ENCODE measurements at regions of chr2 and their contacts with region 1.

Region 1: DNA sequence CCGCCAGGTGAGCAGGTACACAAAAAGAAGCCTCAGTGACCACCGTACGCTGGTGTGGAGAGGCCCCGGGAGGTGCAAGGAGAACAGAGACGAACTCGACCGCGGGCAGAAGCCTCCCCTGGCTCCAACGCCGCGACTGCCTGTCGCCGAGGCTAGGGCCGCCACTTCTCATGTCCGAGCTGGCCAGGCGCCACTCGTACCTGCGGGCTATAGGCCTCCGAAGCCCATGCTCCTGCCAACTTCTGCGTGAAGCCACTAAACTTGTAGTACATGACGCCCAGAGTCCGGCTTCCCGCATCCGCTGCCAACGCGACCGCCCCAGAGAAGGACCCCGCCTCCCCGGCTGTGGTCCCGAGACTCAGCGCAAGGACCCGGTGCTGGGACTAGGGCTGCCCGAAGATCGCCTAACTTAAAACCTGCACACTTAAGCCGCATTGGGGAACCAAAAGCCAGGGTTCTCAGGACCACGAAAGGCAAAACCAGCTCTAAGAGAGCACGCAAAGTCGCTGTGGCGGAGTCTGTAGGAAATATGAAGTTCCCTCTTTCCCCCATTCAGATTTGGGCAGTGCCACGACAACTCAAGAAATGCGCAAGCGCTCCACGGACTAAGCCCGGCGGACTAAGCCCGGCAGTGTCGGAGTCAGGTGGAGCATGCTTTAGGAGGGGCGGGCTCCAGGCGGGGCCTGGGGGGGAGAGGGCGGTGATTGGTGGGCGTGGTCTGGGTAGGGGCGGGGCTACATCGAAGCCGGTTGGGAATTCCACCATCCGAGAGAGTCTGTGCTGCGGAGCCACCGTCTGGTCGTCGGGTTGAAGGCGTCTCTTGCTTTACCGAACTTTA is at the start of gene COX7A2L:
- DNase-seq: peak; percentile 97 to 99 (median 98)
- H3K4me3 ChIP-seq: peak within 1 kb of the TSS; percentile 99
- H3K27ac ChIP-seq: peak within 1 kb of the TSS; percentile 70 to 89
- H3K4me1 ChIP-seq: peaks cover 5% of the 10 kb centered on the region
- H3K27me3 ChIP-seq: no peaks in the 10 kb centered on the region
- CTCF ChIP-seq: peak in 2 of 3 donors; percentile 18 to 38
- EP300 ChIP-seq: no peak
- POLR2A ChIP-seq: peak; percentile 81
- total RNA-seq, gene COX7A2L: 130 to 294 (median 162) TPM

Region 2: DNA sequence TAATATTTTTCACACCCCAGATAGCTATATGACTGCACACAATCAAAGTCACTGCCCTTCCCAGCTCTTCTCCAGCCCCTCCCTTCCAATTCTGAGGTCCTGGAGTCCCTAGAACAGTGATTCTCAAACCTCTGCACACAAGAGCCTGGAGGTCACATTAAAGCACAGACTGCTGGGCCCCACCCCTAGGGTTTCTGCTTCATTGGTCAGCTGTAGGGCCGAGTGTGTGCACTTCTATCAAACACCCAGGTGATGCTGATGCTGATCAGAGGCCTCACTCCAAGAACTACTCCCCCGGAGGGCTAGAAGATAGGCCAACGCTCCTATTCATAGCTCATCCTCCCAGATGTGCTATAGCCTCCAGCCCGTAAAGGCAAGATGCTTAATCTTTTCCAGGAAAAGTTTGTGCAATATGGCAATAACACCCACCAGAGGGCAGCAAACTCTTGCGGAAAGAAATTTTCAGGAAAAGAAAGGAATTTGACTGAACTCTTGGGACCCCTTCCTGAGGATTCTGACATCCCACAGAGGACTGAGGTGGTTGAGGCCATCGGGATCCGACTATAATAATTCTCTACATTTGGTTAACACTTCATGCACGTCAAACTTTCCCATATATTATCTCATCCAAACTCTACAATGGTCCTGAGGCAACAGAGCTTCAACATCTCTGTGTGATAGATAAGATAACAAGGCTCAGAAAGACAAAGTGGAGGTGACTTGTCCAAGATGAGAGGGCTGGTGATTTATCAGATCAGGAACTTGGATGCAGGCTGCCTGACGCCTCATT is 507.5 kb before region 1 on chr2:
- intact Hi-C with region 1: loop called in 1 of 4 experiments (anchors 10 kb)
- DNase-seq: peak in 4 of 5 donors; percentile 54 to 79 (median 66)
- H3K4me3 ChIP-seq: no peak overlapping the region
- H3K27ac ChIP-seq: no peak overlapping the region
- H3K4me1 ChIP-seq: no peaks in the 10 kb centered on the region
- H3K27me3 ChIP-seq: no peaks in the 10 kb centered on the region
- CTCF ChIP-seq: peak; percentile 52 to 84 (median 76)
- EP300 ChIP-seq: no peak
- POLR2A ChIP-seq: no peak

Region 3: DNA sequence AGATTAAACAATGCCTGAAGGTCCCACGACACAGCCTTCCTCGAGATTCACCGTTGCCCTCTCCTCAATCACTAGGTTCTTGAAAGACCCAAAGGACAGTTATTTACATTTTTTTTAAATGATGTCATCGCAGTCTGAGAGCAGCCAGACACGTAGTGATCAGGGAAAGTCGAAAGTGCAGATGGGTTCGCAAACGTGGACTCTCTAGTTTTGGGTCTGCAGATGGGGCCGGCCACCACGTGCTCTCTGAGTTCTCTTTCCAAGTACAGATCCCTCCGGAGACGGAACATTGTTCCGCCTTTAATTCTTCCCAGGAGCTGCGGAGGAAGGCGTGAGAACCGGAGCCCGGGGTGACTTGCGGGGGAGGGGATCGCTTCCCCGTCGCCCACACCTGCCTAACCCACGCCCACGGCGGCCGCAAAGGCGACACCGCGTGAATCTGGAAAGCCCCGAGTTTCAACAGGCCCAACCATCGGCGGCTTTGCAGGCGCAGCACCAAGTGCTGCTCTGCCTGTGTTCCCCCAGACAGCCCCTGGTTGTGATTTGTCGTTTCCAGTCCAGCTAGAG is 259.0 kb before region 1 on chr2:
- intact Hi-C with region 1: loop called in 3 of 4 experiments (anchors 5 to 10 kb)
- DNase-seq: peak; percentile 73 to 81 (median 75)
- H3K4me3 ChIP-seq: peak overlapping the region; percentile 44
- H3K27ac ChIP-seq: peak overlapping the region; percentile 86 to 96
- H3K4me1 ChIP-seq: peaks cover 4% of the 10 kb centered on the region
- H3K27me3 ChIP-seq: no peaks in the 10 kb centered on the region
- CTCF ChIP-seq: no peak
- EP300 ChIP-seq: no peak
- POLR2A ChIP-seq: no peak

Region 4: DNA sequence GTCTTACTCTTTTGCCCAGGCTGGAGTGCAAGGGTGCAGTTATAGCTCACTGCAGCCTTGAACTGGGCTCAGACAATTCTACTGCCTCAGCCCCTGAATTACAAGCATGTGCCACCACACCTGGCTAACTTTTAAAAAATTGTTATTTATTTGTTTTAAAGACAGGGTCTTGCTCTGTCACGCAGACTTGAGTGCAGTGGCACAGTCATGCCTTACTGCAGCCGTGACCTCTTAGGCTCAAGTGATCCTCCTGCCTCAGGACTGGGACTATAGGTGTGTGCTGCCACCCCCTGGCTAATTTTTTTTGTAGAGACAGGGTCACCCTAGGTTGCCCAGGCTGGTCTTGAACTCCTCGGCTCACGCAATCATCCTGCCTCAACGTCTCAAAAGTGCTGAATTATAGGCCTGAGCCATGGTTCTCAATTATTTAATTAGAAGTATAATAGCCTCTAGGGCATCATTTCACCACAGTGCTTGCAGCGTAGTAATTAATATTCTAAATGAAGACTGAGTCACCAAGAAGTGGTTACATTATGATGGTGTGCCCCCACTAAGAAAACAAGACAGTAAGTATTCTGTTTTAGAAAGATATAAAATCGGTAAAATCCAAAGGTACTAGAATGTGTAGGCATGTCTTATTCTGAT is 122.3 kb before region 1 on chr2:
- intact Hi-C with region 1: no loop called
- DNase-seq: peak in 2 of 5 donors; percentile 17 to 45
- H3K4me3 ChIP-seq: no peak overlapping the region
- H3K27ac ChIP-seq: no peak overlapping the region
- H3K4me1 ChIP-seq: peaks cover 3% of the 10 kb centered on the region
- H3K27me3 ChIP-seq: no peaks in the 10 kb centered on the region
- CTCF ChIP-seq: peak in 2 of 3 donors; percentile 19 to 50
- EP300 ChIP-seq: no peak
- POLR2A ChIP-seq: no peak

Region 5: DNA sequence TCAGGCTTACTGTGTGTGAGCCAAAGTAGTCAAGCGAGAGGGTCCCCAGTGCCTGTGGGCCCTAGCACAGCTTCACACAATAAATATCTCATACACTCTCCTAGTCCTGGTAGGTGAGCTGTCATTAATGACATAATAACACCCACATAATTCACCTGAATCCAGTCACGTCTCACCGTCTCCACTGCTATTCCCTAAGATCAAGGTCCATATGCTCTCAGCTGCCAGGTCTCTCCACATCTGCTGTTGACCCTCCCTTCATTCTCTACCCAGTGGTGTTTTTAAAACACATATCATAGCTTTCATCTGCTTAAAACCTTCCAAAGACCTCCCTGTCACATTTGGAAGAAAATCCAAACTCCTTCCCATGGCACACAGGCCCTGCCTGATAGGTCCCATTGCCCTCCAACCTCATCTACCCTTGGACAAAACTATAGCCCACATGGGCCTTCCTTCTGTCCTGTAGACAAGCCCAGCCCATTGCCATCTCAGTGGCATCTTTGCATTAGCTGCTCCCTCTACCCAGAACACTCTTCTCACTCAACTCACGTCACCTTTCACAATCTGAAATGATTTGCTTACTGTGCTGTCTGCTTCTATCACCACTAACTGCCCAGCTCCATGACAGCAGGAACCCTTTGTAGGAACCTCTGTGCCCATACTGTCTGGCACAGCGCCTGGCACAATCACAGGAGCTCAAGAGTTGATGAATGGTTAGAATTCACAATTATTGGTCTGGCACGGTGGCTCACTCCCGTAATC is 125.2 kb after region 1 on chr2:
- intact Hi-C with region 1: no loop called
- DNase-seq: no peak
- H3K4me3 ChIP-seq: no peak overlapping the region
- H3K27ac ChIP-seq: no peak overlapping the region
- H3K4me1 ChIP-seq: no peaks in the 10 kb centered on the region
- H3K27me3 ChIP-seq: no peaks in the 10 kb centered on the region
- CTCF ChIP-seq: no peak
- EP300 ChIP-seq: no peak
- POLR2A ChIP-seq: no peak

Region 6: DNA sequence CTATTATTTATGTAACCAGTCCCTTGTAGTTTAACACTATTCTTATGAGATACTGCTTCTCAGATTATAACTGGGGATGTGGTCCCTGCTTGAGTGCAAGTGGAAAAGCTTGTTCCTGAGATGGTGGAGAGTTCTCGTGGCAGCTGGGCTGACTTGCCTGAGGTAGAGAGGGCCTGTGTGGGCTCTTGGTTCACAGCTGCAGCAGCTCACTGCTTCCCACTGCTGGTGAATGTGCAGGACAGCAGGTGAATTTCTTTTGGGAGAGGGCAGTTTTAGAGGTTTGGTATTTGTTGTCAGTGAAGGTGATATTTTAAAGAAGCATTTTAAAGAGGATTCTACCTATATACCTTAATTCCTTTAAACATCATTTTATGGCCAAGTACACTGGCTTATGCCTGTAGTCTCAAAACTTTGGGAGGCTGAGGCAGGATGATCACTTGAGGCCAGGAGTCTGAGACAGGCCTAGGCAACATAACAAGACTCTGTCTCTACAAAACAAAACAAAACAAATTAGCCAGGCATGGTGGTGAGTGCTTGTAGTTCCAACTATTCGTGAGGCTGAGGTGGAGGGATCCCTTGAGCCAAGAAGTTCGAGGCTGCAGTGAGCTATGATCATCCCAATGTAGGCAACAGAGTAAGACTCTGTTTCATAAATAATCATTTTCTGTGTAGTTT is 302.1 kb after region 1 on chr2:
- intact Hi-C with region 1: loop called in 1 of 4 experiments (anchors 10 kb)
- DNase-seq: peak; percentile 67 to 72 (median 69)
- H3K4me3 ChIP-seq: no peak overlapping the region
- H3K27ac ChIP-seq: no peak overlapping the region
- H3K4me1 ChIP-seq: no peaks in the 10 kb centered on the region
- H3K27me3 ChIP-seq: no peaks in the 10 kb centered on the region
- CTCF ChIP-seq: peak; percentile 87 to 96 (median 88)
- EP300 ChIP-seq: no peak
- POLR2A ChIP-seq: no peak

Region 7: GRCh38 chr2:43438858-43439655 is 1077.9 kb after region 1 on chr2:
- intact Hi-C with region 1: no loop called
- DNase-seq: no peak
- H3K4me3 ChIP-seq: no peak overlapping the region
- H3K27ac ChIP-seq: no peak overlapping the region
- H3K4me1 ChIP-seq: no peaks in the 10 kb centered on the region
- H3K27me3 ChIP-seq: no peaks in the 10 kb centered on the region
- CTCF ChIP-seq: no peak
- EP300 ChIP-seq: no peak
- POLR2A ChIP-seq: no peak

Measured in ovary (tissue), 10 donors.